IMR-90 (cell line): ENCODE measurements at regions of chr1 and their contacts with region 1.

Region 1: GRCh38 chr1:33007190-33008050 is 29.3 kb downstream of the AK2 start:
- DNase-seq: peak; percentile 94
- ATAC-seq: peak; percentile 96
- H3K4me3 ChIP-seq: no peak overlapping the region
- H3K27ac ChIP-seq: no peak overlapping the region
- H3K4me1 ChIP-seq: peaks cover 25% of the 10 kb centered on the region
- H3K27me3 ChIP-seq: no peaks in the 10 kb centered on the region
- CTCF ChIP-seq: peak; percentile 89
- POLR2A ChIP-seq: peak; percentile 47; the same call in 1 of the 2 replicates
- RAD21 ChIP-seq: peak; percentile 92

Region 2: GRCh38 chr1:32933742-32934322 is 73.6 kb before region 1 on chr1:
- CTCF ChIA-PET with region 1: interaction called, 16 read pairs
- POLR2A ChIA-PET with region 1: no interaction called
- dilution Hi-C with region 1: no loop called
- in situ Hi-C with region 1: loop called (anchors 5 kb)
- intact Hi-C with region 1: loop called (anchors 1 kb)
- DNase-seq: peak; percentile 19
- ATAC-seq: peak; percentile 56
- H3K4me3 ChIP-seq: no peak overlapping the region
- H3K27ac ChIP-seq: no peak overlapping the region
- H3K4me1 ChIP-seq: peaks cover 4% of the 10 kb centered on the region; the same call in 1 of the 2 replicates
- H3K27me3 ChIP-seq: no peaks in the 10 kb centered on the region
- CTCF ChIP-seq: no peak
- POLR2A ChIP-seq: no peak
- RAD21 ChIP-seq: no peak

Region 3: GRCh38 chr1:32964461-32965250 is 42.8 kb before region 1 on chr1 and contains the start of gene RNF19B:
- CTCF ChIA-PET with region 1: interaction called, 11 read pairs
- POLR2A ChIA-PET with region 1: no interaction called
- dilution Hi-C with region 1: no loop called
- in situ Hi-C with region 1: no loop called
- intact Hi-C with region 1: loop called (anchors 1 kb)
- DNase-seq: peak; percentile 89
- ATAC-seq: peak; percentile 96
- H3K4me3 ChIP-seq: peak within 1 kb of the TSS; percentile 94
- H3K27ac ChIP-seq: peak within 1 kb of the TSS; percentile 65
- H3K4me1 ChIP-seq: peaks cover 16% of the 10 kb centered on the region
- H3K27me3 ChIP-seq: no peaks in the 10 kb centered on the region
- CTCF ChIP-seq: no peak
- POLR2A ChIP-seq: peak; percentile 97
- RAD21 ChIP-seq: no peak
- total RNA-seq, gene RNF19B: 9.2 and 10.0 TPM in 2 replicates